Activated CD8-positive, alpha-beta T cell treated with anti-CD3 and anti-CD28 coated beads for 36 hours (primary cell): ENCODE measurements at regions of chr19 and their contacts with region 1.

Region 1: GRCh38 chr19:45817010-45817724 is 2.1 kb upstream of the RSPH6A start:
- DNase-seq: peak; percentile 98
- ATAC-seq: peak; percentile 99
- H3K4me3 Mint-ChIP-seq: no peak overlapping the region
- H3K27ac Mint-ChIP-seq: no peak overlapping the region
- H3K4me1 Mint-ChIP-seq: peaks cover 2% of the 10 kb centered on the region
- H3K27me3 Mint-ChIP-seq: no peaks in the 10 kb centered on the region
- CTCF ChIP-seq: peak; percentile 100

Region 2: DNA sequence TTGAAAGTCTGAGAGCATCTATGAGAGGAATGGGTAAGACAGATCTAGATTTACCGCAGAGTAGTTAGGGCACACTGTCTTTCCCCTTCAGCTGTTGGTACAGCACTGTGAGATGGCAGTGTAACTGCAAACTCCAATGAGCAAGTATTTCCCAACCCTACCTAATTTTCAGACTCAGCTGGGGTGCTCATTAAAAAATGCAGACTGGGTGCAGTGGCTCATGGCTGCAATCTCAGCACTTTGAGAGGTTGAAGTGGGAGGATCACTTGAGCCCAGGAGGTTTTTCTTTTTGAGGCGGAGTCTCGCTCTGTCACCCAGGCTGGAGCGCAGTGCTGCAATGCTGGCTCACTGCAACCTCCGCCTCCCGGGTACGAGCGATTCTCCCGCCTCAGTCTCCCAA is 112.1 kb before region 1 on chr19:
- CTCF ChIA-PET with region 1: no interaction called
- POLR2A ChIA-PET with region 1: no interaction called
- intact Hi-C with region 1: no loop called
- DNase-seq: no peak
- ATAC-seq: no peak
- H3K4me3 Mint-ChIP-seq: no peak overlapping the region
- H3K27ac Mint-ChIP-seq: no peak overlapping the region
- H3K4me1 Mint-ChIP-seq: peaks cover 5% of the 10 kb centered on the region
- H3K27me3 Mint-ChIP-seq: no peaks in the 10 kb centered on the region
- CTCF ChIP-seq: no peak

Region 3: GRCh38 chr19:45770192-45771101 is 46.7 kb before region 1 on chr19:
- CTCF ChIA-PET with region 1: interaction called, 52 read pairs
- POLR2A ChIA-PET with region 1: interaction called, 4 read pairs
- intact Hi-C with region 1: no loop called
- DNase-seq: peak; percentile 91
- ATAC-seq: peak; percentile 72
- H3K4me3 Mint-ChIP-seq: peak overlapping the region; percentile 80
- H3K27ac Mint-ChIP-seq: no peak overlapping the region
- H3K4me1 Mint-ChIP-seq: peaks cover 12% of the 10 kb centered on the region
- H3K27me3 Mint-ChIP-seq: peaks cover 16% of the 10 kb centered on the region
- CTCF ChIP-seq: peak; percentile 90

Region 4: GRCh38 chr19:45798995-45799517 is 18.1 kb before region 1 on chr19:
- CTCF ChIA-PET with region 1: interaction called, 37 read pairs
- POLR2A ChIA-PET with region 1: interaction called, 4 read pairs
- intact Hi-C with region 1: no loop called
- DNase-seq: peak; percentile 69
- ATAC-seq: peak; percentile 91
- H3K4me3 Mint-ChIP-seq: no peak overlapping the region
- H3K27ac Mint-ChIP-seq: no peak overlapping the region
- H3K4me1 Mint-ChIP-seq: peaks cover 6% of the 10 kb centered on the region
- H3K27me3 Mint-ChIP-seq: peaks cover 30% of the 10 kb centered on the region
- CTCF ChIP-seq: peak; percentile 89

Region 5: DNA sequence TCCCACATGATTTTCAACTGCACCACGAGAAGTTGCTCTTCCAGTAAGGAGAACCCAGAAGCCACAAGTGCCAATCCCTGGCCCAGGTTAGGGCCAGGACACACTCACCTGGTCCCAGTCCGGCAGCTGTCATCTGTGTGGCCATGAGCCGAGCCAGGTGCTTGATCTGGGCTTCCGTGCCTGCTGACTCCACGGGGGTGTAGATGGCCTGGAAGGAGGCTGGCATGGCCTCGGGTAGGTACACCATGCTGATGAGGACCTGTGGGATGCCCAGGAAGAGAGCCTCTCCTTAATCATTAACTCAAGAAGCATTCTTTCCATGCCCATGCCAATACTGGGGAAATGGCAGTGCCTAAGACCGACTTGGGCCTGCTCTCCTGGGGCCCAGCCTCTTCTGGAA is 17.8 kb after region 1 on chr19:
- CTCF ChIA-PET with region 1: interaction called, 12 read pairs
- POLR2A ChIA-PET with region 1: interaction called, 4 read pairs
- intact Hi-C with region 1: no loop called
- DNase-seq: no peak
- ATAC-seq: no peak
- H3K4me3 Mint-ChIP-seq: no peak overlapping the region
- H3K27ac Mint-ChIP-seq: no peak overlapping the region
- H3K4me1 Mint-ChIP-seq: no peaks in the 10 kb centered on the region
- H3K27me3 Mint-ChIP-seq: no peaks in the 10 kb centered on the region
- CTCF ChIP-seq: no peak

Region 6: DNA sequence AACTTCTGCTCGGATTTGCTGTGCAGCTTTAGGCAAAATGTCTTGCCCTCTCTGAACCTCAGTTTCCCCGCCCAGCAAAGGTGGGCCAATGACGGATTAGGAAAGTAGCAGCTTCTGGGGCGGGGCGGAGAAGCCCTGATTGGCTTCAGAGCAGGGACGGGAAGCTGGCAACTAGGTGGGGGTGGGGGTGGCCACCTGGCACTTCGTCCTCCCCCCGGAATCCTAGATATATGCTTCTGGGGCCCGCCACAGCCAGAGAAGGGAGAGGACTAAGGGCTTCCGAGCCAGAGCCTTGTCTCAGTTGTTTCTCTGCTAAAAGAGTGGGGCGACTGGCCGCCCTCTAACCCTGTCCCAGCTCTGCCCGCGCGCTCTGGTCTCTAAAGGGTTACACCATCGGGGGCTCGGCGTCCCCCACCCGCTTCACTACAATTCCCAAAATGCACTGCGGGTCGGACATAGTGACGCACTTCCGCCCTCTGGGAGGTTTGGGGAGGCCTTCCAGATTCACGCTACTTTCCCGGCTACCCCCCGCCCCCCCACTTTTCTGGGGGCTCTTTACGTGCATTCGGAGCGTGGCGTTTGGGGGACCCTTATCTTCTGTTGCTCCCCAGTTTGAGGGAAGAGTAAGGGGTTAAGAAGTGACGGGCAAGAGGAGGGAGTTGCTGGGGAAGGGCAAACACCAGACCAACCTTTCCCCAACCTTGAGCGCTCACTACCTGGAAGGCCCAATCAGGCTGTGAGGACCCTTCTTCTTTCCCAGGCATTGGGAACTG is 69.4 kb after region 1 on chr19:
- CTCF ChIA-PET with region 1: interaction called, 26 read pairs
- POLR2A ChIA-PET with region 1: interaction called, 7 read pairs
- intact Hi-C with region 1: no loop called
- DNase-seq: peak; percentile 98
- ATAC-seq: peak; percentile 85
- H3K4me3 Mint-ChIP-seq: peak overlapping the region; percentile 84
- H3K27ac Mint-ChIP-seq: peak overlapping the region; percentile 92
- H3K4me1 Mint-ChIP-seq: peaks cover 16% of the 10 kb centered on the region
- H3K27me3 Mint-ChIP-seq: no peaks in the 10 kb centered on the region
- CTCF ChIP-seq: no peak